ENCODE measurements at regions of chr7 and their contacts with region 1.

Region 1: DNA sequence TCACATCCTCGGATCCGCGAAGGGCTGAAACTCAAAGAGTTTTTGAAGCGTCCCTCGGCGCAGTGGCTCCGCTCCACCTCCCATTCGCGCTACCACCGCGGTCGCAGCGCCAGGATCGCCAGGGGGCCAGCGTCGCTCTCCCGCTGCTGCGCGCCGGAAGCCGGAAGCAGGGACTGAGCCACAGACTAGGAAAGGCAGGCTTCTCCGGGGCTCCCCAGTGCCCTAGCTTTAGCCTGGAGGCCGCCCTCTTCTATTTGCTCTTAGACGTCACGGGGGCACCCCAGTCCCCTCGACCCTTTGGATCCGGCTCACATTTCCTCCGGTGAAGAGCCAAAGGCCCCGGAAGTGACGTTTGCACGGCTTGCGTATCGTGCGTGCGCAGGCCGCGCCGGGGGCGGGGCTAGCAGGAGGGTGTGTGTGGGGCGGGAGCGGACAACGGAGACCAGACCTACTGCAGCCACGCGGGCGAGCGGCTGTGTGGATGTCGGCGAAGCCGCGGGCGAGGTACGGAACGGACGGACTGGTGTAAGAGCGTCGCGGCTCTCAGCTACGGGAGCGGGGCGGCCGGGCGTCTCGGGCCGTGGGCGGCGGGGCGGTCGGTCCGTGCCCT is 25.5 kb downstream of the KCTD7 start:
- DNase-seq: peak; percentile 95 to 99
- H3K4me3 ChIP-seq: peak overlapping the region; percentile 80 to 88 (median 84)
- H3K27ac ChIP-seq: peak overlapping the region; percentile 84
- H3K4me1 ChIP-seq: peaks cover 0 to 4% (median 2%) of the 10 kb centered on the region in 4 experiments; a peak in 2 of 7 replicates
- H3K27me3 ChIP-seq: no peaks in the 10 kb centered on the region
- CTCF ChIP-seq: no peak
- EP300 ChIP-seq: no peak; a peak in 1 of 3 replicates
- POLR2A ChIP-seq: peak; percentile 96 to 99
- RAD21 ChIP-seq: peak in 1 of 2 experiments; percentile 8; a peak in 1 of 4 replicates

Region 2: DNA sequence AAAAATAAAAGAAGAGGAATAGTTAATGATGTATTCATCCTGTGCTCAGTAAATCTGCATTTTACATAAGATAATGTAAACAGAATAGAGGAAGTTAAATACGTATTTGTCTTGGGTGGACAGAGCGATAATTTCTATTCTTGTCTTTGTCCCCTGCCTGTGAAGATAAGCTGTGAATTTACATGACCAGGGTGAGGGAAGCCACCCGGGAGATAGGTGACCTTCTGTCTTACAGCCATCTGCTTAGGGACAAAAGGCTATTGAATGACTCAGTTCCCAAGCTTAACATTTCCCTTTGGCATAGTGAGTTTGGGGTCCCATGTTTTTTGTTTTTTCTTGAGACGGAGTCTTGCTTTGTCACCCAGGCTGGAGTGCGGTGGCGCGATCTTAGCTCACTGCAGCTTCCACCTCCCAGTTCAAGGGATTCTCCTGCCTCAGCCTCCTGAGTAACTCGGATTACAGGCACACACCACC is 114.3 kb before region 1 on chr7:
- CTCF ChIA-PET with region 1: no interaction called
- POLR2A ChIA-PET with region 1: no interaction called
- DNase-seq: no peak
- H3K4me3 ChIP-seq: no peak overlapping the region
- H3K27ac ChIP-seq: no peak overlapping the region
- H3K4me1 ChIP-seq: peaks cover 0 to 4% (median 0%) of the 10 kb centered on the region in 4 experiments; a peak in 2 of 7 replicates
- H3K27me3 ChIP-seq: no peaks in the 10 kb centered on the region
- CTCF ChIP-seq: no peak
- EP300 ChIP-seq: no peak
- POLR2A ChIP-seq: no peak
- RAD21 ChIP-seq: no peak

Region 3: DNA sequence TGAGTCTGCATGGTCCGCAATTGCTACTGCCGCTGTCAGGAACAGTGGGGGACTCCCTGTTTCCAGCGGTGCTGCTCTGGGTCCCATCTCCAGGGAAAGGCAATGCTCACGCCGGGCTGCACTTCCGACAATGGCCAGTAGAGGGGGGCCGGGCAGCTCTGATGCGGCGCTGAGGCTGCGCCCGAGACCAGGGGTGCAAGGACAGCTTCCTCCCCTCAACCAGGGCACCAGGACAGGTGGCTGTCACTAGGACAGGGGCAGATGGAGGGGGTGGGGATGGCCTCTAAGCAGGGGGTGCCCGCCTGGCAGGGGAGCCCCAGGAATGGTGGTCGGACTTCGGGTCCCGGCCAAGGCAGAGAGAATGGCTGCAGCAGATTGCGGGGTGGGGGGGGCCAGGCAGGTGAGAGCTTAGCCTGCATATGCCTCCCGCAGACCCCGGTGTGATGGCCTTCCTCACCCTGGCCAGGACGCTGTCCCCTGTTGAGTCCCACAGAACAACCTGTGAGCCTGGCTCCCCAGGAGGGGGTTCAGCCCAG is 96.6 kb before region 1 on chr7:
- CTCF ChIA-PET with region 1: interaction called, 7 read pairs
- POLR2A ChIA-PET with region 1: interaction called, 21 read pairs
- DNase-seq: peak; percentile 27 to 99
- H3K4me3 ChIP-seq: no peak overlapping the region
- H3K27ac ChIP-seq: no peak overlapping the region
- H3K4me1 ChIP-seq: peaks cover 0 to 5% (median 1%) of the 10 kb centered on the region in 4 experiments; a peak in 4 of 7 replicates
- H3K27me3 ChIP-seq: no peaks in the 10 kb centered on the region
- CTCF ChIP-seq: peak; percentile 89 to 99 (median 95)
- EP300 ChIP-seq: no peak
- POLR2A ChIP-seq: no peak
- RAD21 ChIP-seq: peak; percentile 90 to 96

Region 4: DNA sequence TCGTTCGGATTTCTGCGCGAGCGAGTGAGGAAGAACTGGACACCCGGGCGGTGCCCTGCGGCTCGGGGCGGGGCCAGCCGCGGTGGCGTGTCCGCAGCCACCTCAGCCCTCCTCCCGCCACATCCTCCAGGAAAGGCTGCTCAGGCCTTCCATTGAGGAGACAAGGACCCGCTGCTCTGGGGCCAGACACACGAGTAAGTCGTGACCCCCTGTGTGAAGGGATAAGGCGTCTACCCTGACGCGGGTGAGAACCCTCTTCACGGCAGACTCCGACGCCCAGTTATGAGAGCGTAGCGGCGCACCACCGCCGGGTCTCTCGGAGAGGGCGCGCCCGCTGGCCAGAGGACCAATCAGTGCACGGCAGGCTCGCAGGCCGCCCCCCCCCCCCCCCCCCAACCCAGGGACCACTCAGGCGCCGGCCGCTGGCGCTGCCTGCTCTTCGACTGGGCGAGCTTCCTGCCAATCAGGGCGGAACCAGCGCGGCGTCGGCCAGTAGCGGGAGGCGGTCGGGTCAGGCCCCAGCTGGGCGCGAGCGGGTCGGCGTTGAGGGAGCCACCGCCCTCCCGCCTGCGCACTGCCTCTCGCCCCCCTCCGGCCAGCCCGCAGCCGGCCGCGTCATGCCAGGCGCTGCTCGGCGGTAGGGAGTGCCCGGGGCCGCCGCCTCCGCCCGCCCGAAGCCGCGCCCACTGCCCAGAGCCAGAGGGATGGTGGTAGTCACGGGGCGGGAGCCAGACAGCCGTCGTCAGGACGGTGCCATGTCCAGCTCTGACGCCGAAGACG is 25.7 kb before region 1 on chr7 and contains the start of gene KCTD7:
- CTCF ChIA-PET with region 1: no interaction called
- POLR2A ChIA-PET with region 1: interaction called, 15 read pairs
- DNase-seq: peak; percentile 91 to 94
- H3K4me3 ChIP-seq: peak within 1 kb of the TSS; percentile 76 to 97 (median 90)
- H3K27ac ChIP-seq: peak within 1 kb of the TSS; percentile 81
- H3K4me1 ChIP-seq: no peaks in the 10 kb centered on the region
- H3K27me3 ChIP-seq: no peaks in the 10 kb centered on the region
- CTCF ChIP-seq: peak in 1 of 3 experiments; percentile 7; a peak in 1 of 4 replicates
- EP300 ChIP-seq: no peak
- POLR2A ChIP-seq: peak; percentile 92 to 93
- RAD21 ChIP-seq: no peak; a peak in 1 of 4 replicates
- total RNA-seq, gene KCTD7: 7.7 and 8.6 TPM in 2 replicates

Region 5: DNA sequence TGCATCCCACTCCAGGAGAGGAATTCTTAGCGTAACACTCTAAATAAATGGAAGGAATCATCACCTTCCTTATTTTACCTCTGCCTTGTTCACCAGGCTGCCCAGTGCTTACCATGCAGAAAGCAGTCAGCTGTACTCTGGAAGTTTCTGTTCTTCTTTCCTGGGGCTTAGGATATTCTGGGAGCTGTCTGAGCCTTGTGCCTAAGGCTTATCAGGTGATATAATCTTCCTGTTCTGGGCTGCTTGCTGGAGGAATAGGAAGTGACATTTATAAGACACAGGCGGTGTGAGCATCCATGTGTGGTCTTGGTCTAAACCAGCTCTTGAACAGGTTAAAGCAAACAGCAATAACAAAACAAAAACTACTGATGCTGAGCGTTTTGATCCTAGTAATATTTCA is 12.0 kb before region 1 on chr7:
- CTCF ChIA-PET with region 1: interaction called, 7 read pairs
- POLR2A ChIA-PET with region 1: interaction called, 23 read pairs
- DNase-seq: no peak
- H3K4me3 ChIP-seq: no peak overlapping the region
- H3K27ac ChIP-seq: no peak overlapping the region
- H3K4me1 ChIP-seq: no peaks in the 10 kb centered on the region
- H3K27me3 ChIP-seq: no peaks in the 10 kb centered on the region
- CTCF ChIP-seq: no peak
- EP300 ChIP-seq: no peak
- POLR2A ChIP-seq: no peak
- RAD21 ChIP-seq: no peak

Region 6: GRCh38 chr7:66664650-66665293 is 10.5 kb after region 1 on chr7:
- CTCF ChIA-PET with region 1: interaction called, 3 read pairs
- POLR2A ChIA-PET with region 1: interaction called, 22 read pairs
- DNase-seq: no peak
- H3K4me3 ChIP-seq: no peak overlapping the region
- H3K27ac ChIP-seq: no peak overlapping the region
- H3K4me1 ChIP-seq: no peaks in the 10 kb centered on the region
- H3K27me3 ChIP-seq: no peaks in the 10 kb centered on the region
- CTCF ChIP-seq: no peak
- EP300 ChIP-seq: no peak
- POLR2A ChIP-seq: no peak
- RAD21 ChIP-seq: no peak

Region 7: DNA sequence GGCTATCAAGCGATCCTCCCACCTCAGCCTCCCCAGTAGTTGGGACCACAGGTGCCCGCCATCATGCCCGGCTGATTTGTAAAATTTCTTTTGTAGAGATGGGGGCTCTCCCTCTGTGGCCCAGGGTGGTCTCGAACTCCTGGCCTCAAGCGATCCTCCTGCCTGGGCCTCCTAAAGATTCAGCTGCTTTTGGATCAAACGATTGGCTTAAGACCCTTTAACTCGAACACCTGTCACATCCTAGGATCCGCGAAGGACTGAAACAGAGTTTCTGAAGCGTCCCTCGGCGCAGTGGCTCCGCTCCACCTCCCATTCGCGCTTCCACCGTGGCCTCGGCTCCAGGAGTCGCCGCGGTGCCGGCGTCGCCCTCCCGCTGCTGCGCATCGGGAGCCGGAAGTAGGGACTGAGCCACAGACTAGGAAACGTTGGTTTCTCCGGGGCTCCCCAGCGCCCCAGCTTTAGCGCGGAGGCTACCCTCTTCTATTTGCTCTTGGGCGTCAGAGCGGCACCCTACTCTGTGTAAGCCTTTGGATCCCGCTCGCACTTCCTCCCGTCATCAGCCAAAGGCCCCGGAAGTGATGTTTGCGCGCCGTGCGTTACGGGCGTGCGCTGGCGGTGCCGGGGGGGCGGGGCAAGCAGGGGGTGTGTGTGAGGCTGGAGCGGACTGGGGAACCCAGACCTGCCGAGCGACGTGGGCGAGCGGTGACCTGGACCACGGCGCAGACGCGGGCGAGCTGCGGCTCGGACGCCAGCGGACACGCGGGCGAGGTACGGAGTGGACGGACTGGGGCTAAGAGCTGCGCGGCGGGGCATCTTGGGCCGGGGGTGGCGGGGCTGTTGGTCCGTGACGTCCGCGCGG is 27.5 kb after region 1 on chr7:
- CTCF ChIA-PET with region 1: no interaction called
- POLR2A ChIA-PET with region 1: interaction called, 15 read pairs
- DNase-seq: peak; percentile 44 to 98
- H3K4me3 ChIP-seq: peak overlapping the region; percentile 75 to 91 (median 78)
- H3K27ac ChIP-seq: peak overlapping the region; percentile 76; the same call in 1 of the 2 replicates
- H3K4me1 ChIP-seq: no peaks in the 10 kb centered on the region; a peak in 2 of 7 replicates
- H3K27me3 ChIP-seq: no peaks in the 10 kb centered on the region
- CTCF ChIP-seq: no peak
- EP300 ChIP-seq: no peak
- POLR2A ChIP-seq: peak; percentile 45 to 74
- RAD21 ChIP-seq: no peak

Measured in H1 (cell line).